K562 (cell line): ENCODE measurements at regions of chr7 and their contacts with region 1.

Region 1: DNA sequence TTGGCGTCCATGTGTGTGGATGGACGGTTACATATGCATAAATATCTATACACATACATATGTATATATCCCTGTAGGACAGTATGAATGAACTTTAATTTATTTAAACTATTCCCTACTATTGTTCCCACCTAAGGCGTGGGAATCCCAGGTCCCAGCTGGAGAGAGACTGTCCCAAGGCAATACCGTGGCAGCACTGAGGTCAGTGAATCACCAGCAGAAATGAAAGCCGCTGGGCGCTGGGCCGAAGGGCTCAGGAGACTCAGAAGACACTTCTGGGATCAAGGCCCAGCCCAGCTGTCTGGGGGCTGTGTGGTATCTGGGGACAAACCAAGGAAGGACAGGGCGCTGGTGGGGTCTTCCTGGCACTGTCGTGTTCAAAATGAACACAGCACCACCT is 49.6 kb upstream of the MYL10 start:
- DNase-seq: no peak
- ATAC-seq: no peak
- H3K4me3 ChIP-seq: no peak overlapping the region
- H3K27ac ChIP-seq: no peak overlapping the region
- H3K4me1 ChIP-seq: peaks cover 0 to 11% of the 10 kb centered on the region in 2 experiments; a peak in 1 of 5 replicates
- H3K27me3 ChIP-seq: peaks cover 0 to 15% of the 10 kb centered on the region in 2 experiments; a peak in 2 of 5 replicates
- CTCF ChIP-seq: no peak
- EP300 ChIP-seq: no peak
- POLR2A ChIP-seq: no peak
- RAD21 ChIP-seq: no peak

Region 2: DNA sequence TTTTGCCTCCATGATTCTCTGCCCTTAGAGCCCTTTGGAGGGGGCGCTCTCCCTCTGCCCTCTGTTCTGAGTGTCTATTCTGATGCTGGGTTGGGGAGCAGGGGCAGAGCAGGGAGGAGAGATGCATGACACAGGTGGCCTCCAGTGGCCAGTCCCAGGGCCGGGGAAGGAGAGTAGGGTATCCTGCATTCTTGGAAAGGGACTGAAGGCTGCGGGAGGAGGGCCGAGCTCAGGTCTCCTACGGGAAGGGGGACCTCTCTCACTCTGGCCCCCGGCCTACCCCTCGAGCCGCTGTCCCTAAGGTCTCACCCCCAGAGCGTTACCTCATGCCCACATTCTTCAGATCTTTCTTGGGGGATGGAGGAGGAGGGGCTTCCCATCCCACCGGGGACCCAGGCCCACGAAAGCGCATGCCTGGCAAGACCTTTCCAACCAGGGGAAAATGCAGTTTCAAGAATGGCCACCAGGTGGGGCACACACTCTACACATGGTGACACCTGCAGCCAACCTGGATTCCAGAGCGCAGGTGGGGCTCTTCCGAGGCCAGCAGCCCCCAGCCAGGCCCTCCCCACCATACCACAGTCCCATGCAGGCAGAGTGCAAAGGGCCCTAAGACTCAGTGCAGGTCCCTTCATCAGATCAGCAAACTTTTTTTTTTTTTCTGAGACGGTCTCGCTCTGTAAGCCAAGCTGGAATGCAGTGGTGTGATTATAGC is 136.0 kb before region 1 on chr7:
- CTCF ChIA-PET with region 1: no interaction called
- POLR2A ChIA-PET with region 1: no interaction called
- in situ Hi-C with region 1: no loop called
- intact Hi-C with region 1: loop called (anchors 2 kb)
- DNase-seq: peak; percentile 68 to 81 (median 76)
- ATAC-seq: peak; percentile 76
- H3K4me3 ChIP-seq: no peak overlapping the region
- H3K27ac ChIP-seq: no peak overlapping the region
- H3K4me1 ChIP-seq: peaks cover 0 to 26% of the 10 kb centered on the region in 2 experiments; a peak in 1 of 5 replicates
- H3K27me3 ChIP-seq: peaks cover 0 to 5% of the 10 kb centered on the region in 2 experiments; a peak in 2 of 5 replicates
- CTCF ChIP-seq: peak; percentile 88 to 93 (median 91)
- EP300 ChIP-seq: no peak
- POLR2A ChIP-seq: no peak
- RAD21 ChIP-seq: peak; percentile 89 to 93

Region 3: DNA sequence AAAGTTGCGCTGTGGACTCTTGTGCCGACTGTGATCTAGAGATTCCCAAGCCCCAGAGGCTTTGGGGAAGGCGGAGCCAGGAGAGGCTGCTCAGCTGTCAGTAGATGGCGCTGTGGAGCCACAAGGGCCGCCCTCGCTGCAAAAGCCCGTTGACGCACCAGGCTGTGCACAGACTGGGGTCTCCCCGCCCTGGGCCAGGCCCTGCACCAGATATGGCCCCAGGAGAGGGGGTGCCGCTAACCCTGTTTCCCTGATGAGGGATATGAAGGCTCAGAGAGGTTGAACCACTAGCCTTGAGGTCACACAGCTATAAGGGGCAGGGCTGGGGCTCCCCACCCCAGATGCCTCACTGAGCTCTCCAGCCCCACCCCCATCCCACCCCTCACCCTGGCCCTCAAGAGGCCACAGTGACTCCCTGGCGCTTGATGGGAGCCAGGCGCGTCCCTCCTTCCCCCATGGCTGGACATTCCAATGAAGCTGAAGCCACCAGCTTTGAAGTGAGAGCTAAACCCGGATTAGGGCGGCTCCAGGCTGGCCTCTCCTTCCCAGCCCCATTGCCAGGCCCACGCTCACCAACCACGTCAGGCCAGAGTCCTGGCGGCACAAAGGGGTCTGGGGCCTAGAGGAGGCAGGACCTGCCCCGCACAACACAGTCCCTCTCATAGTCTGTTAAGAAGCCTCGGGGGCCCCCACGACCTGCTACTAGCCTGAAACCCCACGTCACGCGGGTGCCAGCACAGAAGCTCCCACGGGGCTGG is 76.0 kb before region 1 on chr7:
- CTCF ChIA-PET with region 1: no interaction called
- POLR2A ChIA-PET with region 1: no interaction called
- in situ Hi-C with region 1: no loop called
- intact Hi-C with region 1: loop called (anchors 5 kb)
- DNase-seq: peak; percentile 80 to 91 (median 88)
- ATAC-seq: peak; percentile 97
- H3K4me3 ChIP-seq: no peak overlapping the region
- H3K27ac ChIP-seq: no peak overlapping the region
- H3K4me1 ChIP-seq: peaks cover 0 to 21% of the 10 kb centered on the region in 2 experiments; a peak in 2 of 5 replicates
- H3K27me3 ChIP-seq: peaks cover 0 to 60% of the 10 kb centered on the region in 2 experiments; a peak in 4 of 5 replicates
- CTCF ChIP-seq: peak; percentile 93 to 95 (median 94)
- EP300 ChIP-seq: no peak
- POLR2A ChIP-seq: no peak
- RAD21 ChIP-seq: peak; percentile 84 to 92